Activated B cell treated with CpG ODN at 0.5 μM for 24 hours (primary cell): ENCODE measurements at regions of chr17 and their contacts with region 1.

Region 1: GRCh38 chr17:38853292-38854219 is at the start of gene RPL23:
- DNase-seq: peak; percentile 79
- ATAC-seq: peak; percentile 86
- H3K4me3 Mint-ChIP-seq: peak within 1 kb of the TSS; percentile 99
- H3K27ac Mint-ChIP-seq: peak within 1 kb of the TSS; percentile 100
- H3K4me1 Mint-ChIP-seq: peaks cover 43% of the 10 kb centered on the region
- H3K27me3 Mint-ChIP-seq: no peaks in the 10 kb centered on the region
- CTCF ChIP-seq: no peak
- total RNA-seq, gene RPL23: 2,652 and 3,293 TPM in 2 replicates

Region 2: GRCh38 chr17:38799378-38800236 is 53.9 kb before region 1 on chr17 and contains the start of gene PIP4K2B:
- CTCF ChIA-PET with region 1: no interaction called
- POLR2A ChIA-PET with region 1: interaction called, 16 read pairs
- intact Hi-C with region 1: loop called (anchors 1 kb)
- DNase-seq: peak; percentile 86
- ATAC-seq: peak; percentile 85
- H3K4me3 Mint-ChIP-seq: peak within 1 kb of the TSS; percentile 88
- H3K27ac Mint-ChIP-seq: peak within 1 kb of the TSS; percentile 87
- H3K4me1 Mint-ChIP-seq: peaks cover 32% of the 10 kb centered on the region
- H3K27me3 Mint-ChIP-seq: no peaks in the 10 kb centered on the region
- CTCF ChIP-seq: no peak
- total RNA-seq, gene PIP4K2B: 32.1 and 33.0 TPM in 2 replicates

Region 3: DNA sequence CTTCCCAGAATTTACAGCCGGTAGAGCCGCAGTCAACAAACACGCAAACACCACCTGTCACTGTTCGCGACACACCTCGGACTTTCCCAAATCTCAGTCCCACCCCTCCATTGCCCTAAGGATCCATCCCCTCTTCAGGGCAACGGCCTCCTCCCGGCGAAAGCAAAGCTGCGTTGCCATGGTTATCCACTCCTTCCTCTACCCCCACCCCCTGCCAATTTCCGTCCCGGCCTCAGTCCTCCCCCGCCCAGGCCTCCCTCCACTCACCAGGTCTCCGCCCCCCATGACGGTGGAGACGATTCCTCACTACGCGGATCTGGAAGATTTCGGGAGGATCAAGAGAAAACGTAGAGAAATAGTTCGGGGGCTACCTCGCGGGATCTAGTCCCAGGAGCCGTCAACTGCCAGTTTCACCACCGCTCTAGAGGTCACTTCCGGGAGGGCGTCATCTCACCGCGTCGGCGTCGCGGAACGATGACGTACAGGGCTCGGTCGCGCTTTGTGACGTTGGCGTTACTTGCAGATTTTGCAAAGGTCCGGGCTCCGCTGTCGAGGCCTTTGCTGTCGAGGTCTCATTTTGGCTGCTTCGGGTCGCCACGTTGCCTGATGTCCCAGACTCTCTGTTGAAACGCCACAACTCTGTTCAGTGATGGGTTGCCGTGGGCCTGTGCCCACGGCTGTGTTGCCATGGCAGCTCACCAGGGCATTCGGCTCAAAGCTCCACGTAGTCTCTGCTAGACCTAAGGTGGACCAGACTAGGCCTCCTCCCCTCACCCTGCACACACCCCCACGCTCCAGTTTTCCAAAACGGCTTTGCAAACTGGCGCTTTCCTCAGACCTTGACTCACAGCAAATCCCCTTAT is 28.4 kb before region 1 on chr17 and contains the start of gene CWC25:
- CTCF ChIA-PET with region 1: interaction called, 4 read pairs
- POLR2A ChIA-PET with region 1: interaction called, 61 read pairs
- intact Hi-C with region 1: loop called (anchors 1 kb)
- DNase-seq: peak; percentile 99
- ATAC-seq: peak; percentile 80
- H3K4me3 Mint-ChIP-seq: peak within 1 kb of the TSS; percentile 98
- H3K27ac Mint-ChIP-seq: peak within 1 kb of the TSS; percentile 99
- H3K4me1 Mint-ChIP-seq: peaks cover 29% of the 10 kb centered on the region
- H3K27me3 Mint-ChIP-seq: peaks cover 3% of the 10 kb centered on the region
- CTCF ChIP-seq: no peak
- total RNA-seq, gene CWC25: 35.6 and 38.3 TPM in 2 replicates

Region 4: GRCh38 chr17:38879878-38880682 is 26.5 kb after region 1 on chr17:
- CTCF ChIA-PET with region 1: no interaction called
- POLR2A ChIA-PET with region 1: interaction called, 370 read pairs
- intact Hi-C with region 1: no loop called
- DNase-seq: no peak
- ATAC-seq: no peak
- H3K4me3 Mint-ChIP-seq: no peak overlapping the region
- H3K27ac Mint-ChIP-seq: peak overlapping the region; percentile 30
- H3K4me1 Mint-ChIP-seq: peaks cover 86% of the 10 kb centered on the region
- H3K27me3 Mint-ChIP-seq: no peaks in the 10 kb centered on the region
- CTCF ChIP-seq: no peak

Region 5: DNA sequence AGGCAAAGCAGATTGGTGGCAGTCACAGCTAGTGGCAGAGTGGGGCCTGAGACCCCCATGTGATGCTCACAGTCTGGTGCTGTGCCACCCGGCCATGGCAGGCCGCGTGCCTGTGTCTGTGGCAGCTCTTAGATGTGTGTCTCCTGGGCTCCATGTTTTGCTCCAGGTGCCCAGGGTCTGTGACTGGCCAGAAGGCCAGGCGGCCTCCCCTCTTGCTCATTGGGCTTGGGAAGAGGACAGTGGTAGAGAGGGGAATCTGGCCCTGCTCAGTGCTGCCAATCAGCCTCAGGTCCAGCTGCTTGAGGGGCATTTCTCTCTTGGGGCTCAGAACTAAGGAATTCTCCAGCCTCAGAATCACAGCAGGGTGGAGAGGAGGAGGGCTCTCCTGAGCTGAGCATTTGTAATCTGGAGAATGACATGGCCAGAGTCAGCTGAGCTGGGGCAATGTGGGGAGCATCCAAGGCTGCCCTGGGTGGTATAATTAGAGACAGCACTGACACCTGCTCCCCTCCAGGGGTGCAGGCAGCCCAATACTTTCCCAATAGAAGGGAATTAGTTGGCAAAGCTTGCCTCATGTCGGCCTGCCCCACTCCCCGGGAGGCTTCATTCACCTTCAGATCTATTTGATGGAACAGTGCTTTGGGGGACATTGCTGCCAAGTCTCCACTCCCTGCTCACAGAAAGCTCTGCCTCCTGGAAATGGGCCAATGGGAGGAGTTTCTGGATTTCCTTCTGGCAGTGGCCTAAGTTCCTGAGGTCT is 69.2 kb after region 1 on chr17:
- CTCF ChIA-PET with region 1: no interaction called
- POLR2A ChIA-PET with region 1: interaction called, 32 read pairs
- intact Hi-C with region 1: no loop called
- DNase-seq: no peak
- ATAC-seq: no peak
- H3K4me3 Mint-ChIP-seq: no peak overlapping the region
- H3K27ac Mint-ChIP-seq: peak overlapping the region; percentile 55
- H3K4me1 Mint-ChIP-seq: peaks cover 21% of the 10 kb centered on the region
- H3K27me3 Mint-ChIP-seq: no peaks in the 10 kb centered on the region
- CTCF ChIP-seq: no peak

Region 6: GRCh38 chr17:38967290-38967738 is 113.8 kb after region 1 on chr17 and contains the start of gene FBXO47:
- CTCF ChIA-PET with region 1: no interaction called
- POLR2A ChIA-PET with region 1: interaction called, 12 read pairs
- intact Hi-C with region 1: no loop called
- DNase-seq: peak; percentile 64
- ATAC-seq: peak; percentile 99
- H3K4me3 Mint-ChIP-seq: peak within 1 kb of the TSS; percentile 78
- H3K27ac Mint-ChIP-seq: peak within 1 kb of the TSS; percentile 85
- H3K4me1 Mint-ChIP-seq: peaks cover 10% of the 10 kb centered on the region
- H3K27me3 Mint-ChIP-seq: no peaks in the 10 kb centered on the region
- CTCF ChIP-seq: no peak
- total RNA-seq, gene FBXO47: not detected in 2 replicates